ENCODE measurements at regions of chr11 and their contacts with region 1.

Region 1: GRCh38 chr11:114262681-114263512 is 33.3 kb upstream of the NNMT start:
- H3K4me3 Mint-ChIP-seq: no peak overlapping the region
- H3K27ac Mint-ChIP-seq: no peak overlapping the region
- H3K4me1 Mint-ChIP-seq: peaks cover 18% of the 10 kb centered on the region
- H3K27me3 Mint-ChIP-seq: peaks cover 4% of the 10 kb centered on the region

Region 2: GRCh38 chr11:113806406-113806805 is 456.5 kb before region 1 on chr11:
- intact Hi-C with region 1: loop called (anchors 2 kb)
- H3K4me3 Mint-ChIP-seq: no peak overlapping the region
- H3K27ac Mint-ChIP-seq: no peak overlapping the region
- H3K4me1 Mint-ChIP-seq: no peaks in the 10 kb centered on the region
- H3K27me3 Mint-ChIP-seq: no peaks in the 10 kb centered on the region

Region 3: GRCh38 chr11:113840932-113841664 is 421.8 kb before region 1 on chr11:
- intact Hi-C with region 1: no loop called
- H3K4me3 Mint-ChIP-seq: no peak overlapping the region
- H3K27ac Mint-ChIP-seq: no peak overlapping the region
- H3K4me1 Mint-ChIP-seq: peaks cover 5% of the 10 kb centered on the region
- H3K27me3 Mint-ChIP-seq: no peaks in the 10 kb centered on the region

Region 4: GRCh38 chr11:113896156-113896879 is 366.6 kb before region 1 on chr11:
- intact Hi-C with region 1: loop called (anchors 1 kb)
- H3K4me3 Mint-ChIP-seq: no peak overlapping the region
- H3K27ac Mint-ChIP-seq: no peak overlapping the region
- H3K4me1 Mint-ChIP-seq: peaks cover 6% of the 10 kb centered on the region
- H3K27me3 Mint-ChIP-seq: no peaks in the 10 kb centered on the region

Region 5: DNA sequence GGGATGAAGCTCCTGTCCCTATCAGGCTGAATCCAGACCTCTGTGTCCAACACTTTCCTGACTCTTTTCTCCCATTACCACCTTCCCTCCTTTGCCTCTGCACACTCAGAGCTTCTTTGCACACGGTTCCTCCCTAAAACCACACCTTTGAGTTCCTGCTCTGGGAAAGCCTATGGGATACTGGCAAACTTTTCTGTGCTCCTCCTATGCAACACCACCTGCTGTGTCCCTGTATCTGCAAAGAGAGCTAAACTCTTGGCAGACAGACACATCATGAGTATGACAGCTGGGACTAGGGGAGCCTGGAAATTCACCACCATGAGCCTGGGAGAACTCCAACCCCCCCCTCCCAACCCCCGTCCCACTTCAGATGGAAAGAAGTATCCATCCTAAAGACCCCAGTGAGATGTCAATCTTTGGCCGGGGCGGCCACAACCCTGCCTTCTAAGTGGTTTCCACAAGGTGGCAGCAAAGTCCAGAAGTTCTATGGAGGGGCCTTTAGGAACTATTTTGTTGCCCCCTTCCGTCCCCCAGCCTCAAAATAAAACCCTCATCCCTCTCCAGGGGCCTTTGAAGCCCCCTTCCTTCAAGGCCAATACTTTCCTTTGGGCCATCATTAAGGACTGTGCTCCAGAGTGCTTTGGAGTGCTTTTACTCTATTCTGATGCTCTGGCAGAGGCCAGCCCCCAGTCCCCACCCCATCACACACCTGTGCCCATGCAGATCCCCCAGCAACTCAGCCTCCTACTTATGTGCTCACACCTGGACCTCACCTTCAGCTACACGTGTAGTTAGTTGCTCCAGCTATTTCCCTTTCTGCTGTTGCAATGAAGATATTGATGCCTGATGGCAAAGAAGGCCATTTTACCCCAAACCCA is 268.6 kb before region 1 on chr11:
- intact Hi-C with region 1: loop called (anchors 1 kb)
- H3K4me3 Mint-ChIP-seq: no peak overlapping the region
- H3K27ac Mint-ChIP-seq: no peak overlapping the region
- H3K4me1 Mint-ChIP-seq: no peaks in the 10 kb centered on the region
- H3K27me3 Mint-ChIP-seq: peaks cover 15% of the 10 kb centered on the region

Region 6: DNA sequence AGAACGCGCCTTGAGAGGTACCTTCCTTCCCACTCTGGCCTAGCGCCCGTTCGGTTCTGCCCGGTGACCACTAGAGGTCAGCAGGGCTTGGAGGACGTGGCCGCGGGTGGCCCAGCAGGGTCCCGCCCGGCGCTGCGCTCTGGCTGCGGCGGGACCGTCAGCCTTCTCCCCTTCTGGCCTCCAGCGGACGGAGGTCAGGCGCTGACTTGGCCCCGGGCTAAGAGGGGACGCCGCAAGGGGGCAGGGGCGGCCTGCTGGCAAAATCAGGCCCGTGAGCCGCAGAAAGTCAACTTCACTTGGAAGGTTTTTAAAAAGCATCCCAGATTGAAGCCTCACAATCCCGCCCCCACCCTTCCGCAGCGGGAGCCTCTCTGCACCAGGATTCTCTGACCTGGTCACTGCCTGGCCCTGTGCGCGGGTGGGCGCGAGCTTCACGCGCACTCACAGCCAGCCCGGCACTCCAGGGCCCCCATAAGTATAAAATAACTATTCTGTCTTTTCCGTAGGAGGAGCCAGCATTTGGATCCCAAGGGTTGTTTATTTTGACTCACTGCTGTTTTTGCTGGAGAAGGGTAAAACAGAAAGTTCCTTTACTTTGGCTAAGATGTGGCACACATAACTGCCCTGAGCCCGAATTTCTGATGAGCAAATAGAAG is 226.6 kb before region 1 on chr11:
- intact Hi-C with region 1: loop called (anchors 1 kb)
- H3K4me3 Mint-ChIP-seq: peak overlapping the region; percentile 50
- H3K27ac Mint-ChIP-seq: no peak overlapping the region
- H3K4me1 Mint-ChIP-seq: peaks cover 23% of the 10 kb centered on the region
- H3K27me3 Mint-ChIP-seq: peaks cover 18% of the 10 kb centered on the region

Region 7: GRCh38 chr11:114135737-114136151 is 127.2 kb before region 1 on chr11:
- intact Hi-C with region 1: no loop called
- H3K4me3 Mint-ChIP-seq: no peak overlapping the region
- H3K27ac Mint-ChIP-seq: peak overlapping the region; percentile 84
- H3K4me1 Mint-ChIP-seq: peaks cover 65% of the 10 kb centered on the region
- H3K27me3 Mint-ChIP-seq: peaks cover 3% of the 10 kb centered on the region